Caco-2 (cell line): ENCODE measurements at regions of chr1 and their contacts with region 1.

Region 1: GRCh38 chr1:48688102-48688760 is 88.5 kb downstream of the BEND5 start:
- DNase-seq: peak in 1 of 2 experiments; percentile 17
- H3K4me3 ChIP-seq: no peak overlapping the region
- H3K4me3 Mint-ChIP-seq: no peak overlapping the region
- H3K27ac Mint-ChIP-seq: no peak overlapping the region
- H3K4me1 ChIP-seq: no peaks in the 10 kb centered on the region
- H3K4me1 Mint-ChIP-seq: peaks cover 6% of the 10 kb centered on the region
- H3K27me3 ChIP-seq: no peaks in the 10 kb centered on the region
- H3K27me3 Mint-ChIP-seq: peaks cover 6% of the 10 kb centered on the region
- CTCF ChIP-seq: peak; percentile 42 to 46

Region 2: GRCh38 chr1:48627486-48627885 is 60.7 kb before region 1 on chr1:
- CTCF ChIA-PET with region 1: no interaction called
- POLR2A ChIA-PET with region 1: no interaction called
- intact Hi-C with region 1: loop called (anchors 2 kb)
- DNase-seq: no peak
- H3K4me3 ChIP-seq: no peak overlapping the region
- H3K4me3 Mint-ChIP-seq: no peak overlapping the region
- H3K27ac Mint-ChIP-seq: no peak overlapping the region
- H3K4me1 ChIP-seq: no peaks in the 10 kb centered on the region
- H3K4me1 Mint-ChIP-seq: no peaks in the 10 kb centered on the region
- H3K27me3 ChIP-seq: no peaks in the 10 kb centered on the region
- H3K27me3 Mint-ChIP-seq: peaks cover 22% of the 10 kb centered on the region
- CTCF ChIP-seq: no peak

Region 3: DNA sequence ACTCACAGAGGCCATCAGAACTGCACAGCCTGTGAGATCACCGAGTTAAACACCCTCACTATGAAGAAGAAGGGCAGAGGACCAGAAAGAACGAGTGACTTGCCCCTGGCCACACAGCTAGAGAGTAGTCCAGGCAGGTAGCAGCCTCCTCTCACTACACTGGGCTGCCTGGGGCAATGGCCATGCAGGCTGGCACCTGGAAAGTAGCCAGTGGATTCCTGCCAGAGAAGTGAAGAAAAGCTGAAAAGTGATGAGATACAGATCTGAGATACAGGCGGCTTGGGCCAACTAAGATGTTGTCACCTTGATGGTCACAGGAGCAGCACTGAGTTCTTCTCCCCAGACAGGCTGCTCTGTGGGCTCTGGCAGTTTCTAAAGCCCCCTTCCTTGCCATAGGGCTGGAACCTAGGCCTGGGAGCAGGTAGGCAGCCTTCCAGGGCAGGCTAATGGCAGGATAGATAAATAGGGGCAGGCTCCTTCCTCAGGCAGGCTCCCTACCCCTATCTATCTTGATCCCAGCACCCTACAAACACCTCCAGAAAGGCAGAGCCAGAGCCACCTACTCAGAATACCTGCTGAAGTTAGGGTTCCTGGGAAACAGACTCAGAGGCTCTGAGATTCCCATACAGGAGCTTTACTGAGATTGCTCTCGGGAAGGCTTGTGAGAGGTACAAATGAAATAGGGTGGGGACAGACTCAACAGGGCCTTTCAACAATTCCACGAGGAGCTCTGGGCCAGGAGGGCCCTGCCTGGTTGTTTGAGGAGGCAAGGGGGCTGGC is 17.8 kb before region 1 on chr1:
- CTCF ChIA-PET with region 1: no interaction called
- POLR2A ChIA-PET with region 1: no interaction called
- intact Hi-C with region 1: no loop called
- DNase-seq: no peak
- H3K4me3 ChIP-seq: no peak overlapping the region
- H3K4me3 Mint-ChIP-seq: no peak overlapping the region
- H3K27ac Mint-ChIP-seq: no peak overlapping the region
- H3K4me1 ChIP-seq: no peaks in the 10 kb centered on the region
- H3K4me1 Mint-ChIP-seq: no peaks in the 10 kb centered on the region
- H3K27me3 ChIP-seq: no peaks in the 10 kb centered on the region
- H3K27me3 Mint-ChIP-seq: peaks cover 9% of the 10 kb centered on the region
- CTCF ChIP-seq: no peak

Region 4: GRCh38 chr1:48730164-48730910 is 42.1 kb after region 1 on chr1:
- CTCF ChIA-PET with region 1: no interaction called
- POLR2A ChIA-PET with region 1: no interaction called
- intact Hi-C with region 1: no loop called
- DNase-seq: no peak
- H3K4me3 ChIP-seq: no peak overlapping the region
- H3K4me3 Mint-ChIP-seq: no peak overlapping the region
- H3K27ac Mint-ChIP-seq: no peak overlapping the region
- H3K4me1 ChIP-seq: no peaks in the 10 kb centered on the region
- H3K4me1 Mint-ChIP-seq: no peaks in the 10 kb centered on the region
- H3K27me3 ChIP-seq: no peaks in the 10 kb centered on the region
- H3K27me3 Mint-ChIP-seq: peaks cover 3% of the 10 kb centered on the region
- CTCF ChIP-seq: no peak

Region 5: GRCh38 chr1:48741395-48741794 is 53.2 kb after region 1 on chr1:
- CTCF ChIA-PET with region 1: no interaction called
- POLR2A ChIA-PET with region 1: no interaction called
- intact Hi-C with region 1: no loop called
- DNase-seq: no peak
- H3K4me3 ChIP-seq: no peak overlapping the region
- H3K4me3 Mint-ChIP-seq: no peak overlapping the region
- H3K27ac Mint-ChIP-seq: no peak overlapping the region
- H3K4me1 ChIP-seq: 0 out of 2 replicates have a peak, but pooled peaks cover 12% of the 10 kb centered on the region
- H3K4me1 Mint-ChIP-seq: peaks cover 8% of the 10 kb centered on the region
- H3K27me3 ChIP-seq: no peaks in the 10 kb centered on the region
- H3K27me3 Mint-ChIP-seq: no peaks in the 10 kb centered on the region
- CTCF ChIP-seq: no peak

Region 6: DNA sequence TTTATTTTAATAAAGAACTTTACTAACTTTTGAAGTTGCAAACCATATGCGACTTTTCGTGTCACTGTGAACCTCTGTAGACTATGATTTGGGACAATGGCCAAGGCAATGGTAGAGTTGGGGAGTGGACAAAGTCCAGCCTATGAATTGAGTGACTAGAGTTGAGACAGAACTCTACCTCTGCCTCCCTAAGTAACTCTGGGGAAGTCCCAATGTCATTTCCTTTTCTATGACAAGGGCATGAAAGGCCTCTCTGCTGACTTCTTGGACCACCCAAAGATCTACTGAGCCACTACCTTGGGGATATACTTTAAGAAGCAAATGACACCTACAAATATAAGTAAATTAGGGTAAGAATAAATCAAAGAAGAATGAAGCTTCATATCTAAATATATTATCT is 69.1 kb after region 1 on chr1:
- CTCF ChIA-PET with region 1: no interaction called
- POLR2A ChIA-PET with region 1: no interaction called
- intact Hi-C with region 1: no loop called
- DNase-seq: no peak
- H3K4me3 ChIP-seq: no peak overlapping the region
- H3K4me3 Mint-ChIP-seq: no peak overlapping the region
- H3K27ac Mint-ChIP-seq: no peak overlapping the region
- H3K4me1 ChIP-seq: peaks cover 25% of the 10 kb centered on the region
- H3K4me1 Mint-ChIP-seq: peaks cover 18% of the 10 kb centered on the region
- H3K27me3 ChIP-seq: no peaks in the 10 kb centered on the region
- H3K27me3 Mint-ChIP-seq: no peaks in the 10 kb centered on the region
- CTCF ChIP-seq: no peak